Activated CD4-positive, alpha-beta T cell treated with anti-CD3 and anti-CD28 coated beads, Interleukin-2, amount 10 ng/mL, durations not matched to agents 24 days and 14 days (primary cell): ENCODE measurements at regions of chr7 and their contacts with region 1.

Region 1: GRCh38 chr7:130970696-130971095 is 236.7 kb upstream of the KLF14 start:
- DNase-seq: no peak
- H3K4me3 Mint-ChIP-seq: peak overlapping the region; percentile 64
- H3K27ac Mint-ChIP-seq: peak overlapping the region; percentile 96
- H3K4me1 Mint-ChIP-seq: peaks cover 57% of the 10 kb centered on the region
- H3K27me3 Mint-ChIP-seq: no peaks in the 10 kb centered on the region

Region 2: GRCh38 chr7:130996841-130997231 is 26.1 kb after region 1 on chr7:
- intact Hi-C with region 1: loop called (anchors 1 kb)
- DNase-seq: peak; percentile 73
- H3K4me3 Mint-ChIP-seq: peak overlapping the region; percentile 70
- H3K27ac Mint-ChIP-seq: peak overlapping the region; percentile 91
- H3K4me1 Mint-ChIP-seq: peaks cover 56% of the 10 kb centered on the region
- H3K27me3 Mint-ChIP-seq: no peaks in the 10 kb centered on the region